Activated CD4-positive, alpha-beta memory T cell treated with anti-CD3 and anti-CD28 coated beads for 36 hours (primary cell): ENCODE measurements at regions of chr3 and their contacts with region 1.

Region 1: GRCh38 chr3:102089904-102090492 is 240.7 kb downstream of the NFKBIZ start:
- DNase-seq: no peak
- H3K4me3 Mint-ChIP-seq: no peak overlapping the region
- H3K27ac Mint-ChIP-seq: no peak overlapping the region
- H3K4me1 Mint-ChIP-seq: peaks cover 48% of the 10 kb centered on the region
- H3K27me3 Mint-ChIP-seq: no peaks in the 10 kb centered on the region

Region 2: GRCh38 chr3:101675709-101676215 is 414.2 kb before region 1 on chr3:
- CTCF ChIA-PET with region 1: no interaction called
- POLR2A ChIA-PET with region 1: no interaction called
- intact Hi-C with region 1: no loop called
- DNase-seq: no peak
- H3K4me3 Mint-ChIP-seq: peak overlapping the region; percentile 93
- H3K27ac Mint-ChIP-seq: peak overlapping the region; percentile 79
- H3K4me1 Mint-ChIP-seq: peaks cover 49% of the 10 kb centered on the region
- H3K27me3 Mint-ChIP-seq: no peaks in the 10 kb centered on the region

Region 3: GRCh38 chr3:101685870-101686412 is 404.1 kb before region 1 on chr3:
- CTCF ChIA-PET with region 1: no interaction called
- POLR2A ChIA-PET with region 1: no interaction called
- intact Hi-C with region 1: loop called (anchors 5 kb)
- DNase-seq: no peak
- H3K4me3 Mint-ChIP-seq: peak overlapping the region; percentile 99
- H3K27ac Mint-ChIP-seq: peak overlapping the region; percentile 99
- H3K4me1 Mint-ChIP-seq: peaks cover 40% of the 10 kb centered on the region
- H3K27me3 Mint-ChIP-seq: no peaks in the 10 kb centered on the region

Region 4: DNA sequence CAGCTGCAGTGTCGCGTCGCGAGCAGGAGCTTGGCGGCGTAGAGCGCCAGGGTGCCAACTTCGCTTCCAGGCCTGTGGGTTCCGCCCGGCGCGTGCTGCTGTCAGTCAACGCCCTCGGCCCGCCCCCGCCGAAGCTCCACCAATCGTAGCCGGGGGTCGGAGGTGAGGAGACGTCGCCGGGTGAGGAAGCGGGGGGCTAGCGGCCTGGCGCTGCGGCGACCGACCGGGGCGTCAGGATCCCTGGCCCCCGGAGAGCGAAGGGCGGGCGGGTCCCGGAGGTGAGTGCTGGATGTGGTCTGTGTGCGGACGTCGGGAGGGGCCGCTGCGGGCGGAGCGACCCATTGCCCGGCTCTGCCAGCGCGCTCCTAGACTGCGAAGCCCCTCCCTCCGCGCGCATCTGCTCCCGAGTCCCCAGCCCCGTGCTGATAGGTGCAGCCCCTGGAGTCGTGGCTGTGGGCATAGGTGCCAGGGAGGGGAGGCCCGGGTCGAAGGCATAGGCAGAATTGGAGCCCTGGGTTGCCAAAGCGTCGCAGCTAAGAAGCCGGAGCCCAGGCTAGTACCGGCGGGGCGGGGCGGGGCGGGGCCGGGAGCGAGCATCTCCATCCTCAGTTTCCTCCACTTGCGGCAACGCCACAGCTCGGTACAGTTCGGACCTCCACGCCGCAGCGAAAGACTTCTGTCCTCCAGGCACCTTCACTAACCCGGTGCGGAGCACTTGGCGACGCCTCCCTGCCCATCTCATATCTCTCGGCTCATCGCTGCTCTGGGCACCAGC is 310.8 kb before region 1 on chr3 and contains the start of gene NXPE3:
- CTCF ChIA-PET with region 1: no interaction called
- POLR2A ChIA-PET with region 1: no interaction called
- intact Hi-C with region 1: no loop called
- DNase-seq: peak; percentile 96
- H3K4me3 Mint-ChIP-seq: peak within 1 kb of the TSS; percentile 95
- H3K27ac Mint-ChIP-seq: peak within 1 kb of the TSS; percentile 95
- H3K4me1 Mint-ChIP-seq: peaks cover 51% of the 10 kb centered on the region
- H3K27me3 Mint-ChIP-seq: no peaks in the 10 kb centered on the region
- total RNA-seq, gene NXPE3: 18.7 to 19.8 TPM

Region 5: DNA sequence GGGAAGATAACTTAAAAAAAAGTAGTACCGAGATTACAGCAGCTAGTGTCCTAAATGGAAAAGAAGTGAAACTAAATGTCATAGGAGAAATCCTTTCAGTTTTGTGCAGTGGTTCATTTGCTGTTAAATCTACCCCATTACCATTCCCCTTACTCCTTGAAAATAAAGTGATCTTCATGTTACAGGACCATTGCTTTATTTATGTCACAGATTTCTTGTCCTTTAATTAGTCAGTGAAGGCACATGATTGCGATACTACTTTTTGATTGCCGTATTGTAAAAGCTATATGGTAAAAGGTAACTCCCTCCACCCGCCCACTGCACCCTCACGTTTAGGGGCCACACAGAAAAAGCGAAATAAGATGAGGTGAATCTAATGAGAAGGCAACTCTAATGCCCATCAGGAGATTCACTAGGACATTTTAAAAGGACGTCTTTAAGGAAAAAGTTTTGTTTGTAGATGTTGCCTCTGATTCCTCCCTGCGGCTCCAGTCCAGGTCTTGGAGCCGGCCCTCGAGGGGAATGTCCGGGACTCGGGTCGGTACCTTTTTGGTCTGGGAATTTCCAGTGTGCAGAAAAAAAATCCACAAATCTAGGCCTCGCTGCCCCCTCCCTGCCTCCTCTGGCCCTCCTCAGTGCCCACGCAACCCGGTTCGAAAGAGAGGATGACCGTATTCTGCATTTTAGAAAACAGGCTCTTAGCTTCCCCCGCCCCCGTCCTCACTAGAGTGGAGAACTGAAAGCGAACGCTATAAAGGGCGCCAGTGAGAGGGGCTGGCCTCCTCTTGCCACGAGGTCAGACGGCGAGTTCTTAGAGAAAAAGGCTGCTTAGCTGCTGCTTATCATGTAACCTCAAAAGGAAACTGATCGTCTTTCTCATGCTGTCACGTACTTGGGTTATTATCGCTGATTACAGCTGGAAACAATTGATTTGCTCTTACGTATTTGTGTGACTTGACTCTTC is 262.5 kb before region 1 on chr3:
- CTCF ChIA-PET with region 1: interaction called, 4 read pairs
- POLR2A ChIA-PET with region 1: interaction called, 3 read pairs
- intact Hi-C with region 1: loop called (anchors 1 kb)
- DNase-seq: peak; percentile 95
- H3K4me3 Mint-ChIP-seq: peak overlapping the region; percentile 85
- H3K27ac Mint-ChIP-seq: peak overlapping the region; percentile 96
- H3K4me1 Mint-ChIP-seq: peaks cover 63% of the 10 kb centered on the region
- H3K27me3 Mint-ChIP-seq: no peaks in the 10 kb centered on the region

Region 6: GRCh38 chr3:101936419-101937356 is 153.3 kb before region 1 on chr3:
- CTCF ChIA-PET with region 1: interaction called, 6 read pairs
- POLR2A ChIA-PET with region 1: no interaction called
- intact Hi-C with region 1: loop called (anchors 1 kb)
- DNase-seq: peak; percentile 65
- H3K4me3 Mint-ChIP-seq: peak overlapping the region; percentile 36
- H3K27ac Mint-ChIP-seq: peak overlapping the region; percentile 50
- H3K4me1 Mint-ChIP-seq: peaks cover 25% of the 10 kb centered on the region
- H3K27me3 Mint-ChIP-seq: peaks cover 15% of the 10 kb centered on the region

Region 7: GRCh38 chr3:102024270-102024904 is 65.6 kb before region 1 on chr3:
- CTCF ChIA-PET with region 1: no interaction called
- POLR2A ChIA-PET with region 1: no interaction called
- intact Hi-C with region 1: loop called (anchors 2 kb)
- DNase-seq: peak; percentile 51
- H3K4me3 Mint-ChIP-seq: no peak overlapping the region
- H3K27ac Mint-ChIP-seq: no peak overlapping the region
- H3K4me1 Mint-ChIP-seq: peaks cover 9% of the 10 kb centered on the region
- H3K27me3 Mint-ChIP-seq: no peaks in the 10 kb centered on the region

Region 8: GRCh38 chr3:102106416-102107097 is 16.6 kb after region 1 on chr3:
- CTCF ChIA-PET with region 1: no interaction called
- POLR2A ChIA-PET with region 1: no interaction called
- intact Hi-C with region 1: loop called (anchors 1 kb)
- DNase-seq: peak; percentile 30
- H3K4me3 Mint-ChIP-seq: no peak overlapping the region
- H3K27ac Mint-ChIP-seq: peak overlapping the region; percentile 7
- H3K4me1 Mint-ChIP-seq: peaks cover 7% of the 10 kb centered on the region
- H3K27me3 Mint-ChIP-seq: no peaks in the 10 kb centered on the region

Region 9: GRCh38 chr3:102163036-102163827 is 73.2 kb after region 1 on chr3:
- CTCF ChIA-PET with region 1: no interaction called
- POLR2A ChIA-PET with region 1: no interaction called
- intact Hi-C with region 1: loop called (anchors 1 kb)
- DNase-seq: no peak
- H3K4me3 Mint-ChIP-seq: no peak overlapping the region
- H3K27ac Mint-ChIP-seq: no peak overlapping the region
- H3K4me1 Mint-ChIP-seq: peaks cover 23% of the 10 kb centered on the region
- H3K27me3 Mint-ChIP-seq: no peaks in the 10 kb centered on the region